B cell (primary cell): ENCODE measurements at regions of chr22 and their contacts with region 1.

Region 1: DNA sequence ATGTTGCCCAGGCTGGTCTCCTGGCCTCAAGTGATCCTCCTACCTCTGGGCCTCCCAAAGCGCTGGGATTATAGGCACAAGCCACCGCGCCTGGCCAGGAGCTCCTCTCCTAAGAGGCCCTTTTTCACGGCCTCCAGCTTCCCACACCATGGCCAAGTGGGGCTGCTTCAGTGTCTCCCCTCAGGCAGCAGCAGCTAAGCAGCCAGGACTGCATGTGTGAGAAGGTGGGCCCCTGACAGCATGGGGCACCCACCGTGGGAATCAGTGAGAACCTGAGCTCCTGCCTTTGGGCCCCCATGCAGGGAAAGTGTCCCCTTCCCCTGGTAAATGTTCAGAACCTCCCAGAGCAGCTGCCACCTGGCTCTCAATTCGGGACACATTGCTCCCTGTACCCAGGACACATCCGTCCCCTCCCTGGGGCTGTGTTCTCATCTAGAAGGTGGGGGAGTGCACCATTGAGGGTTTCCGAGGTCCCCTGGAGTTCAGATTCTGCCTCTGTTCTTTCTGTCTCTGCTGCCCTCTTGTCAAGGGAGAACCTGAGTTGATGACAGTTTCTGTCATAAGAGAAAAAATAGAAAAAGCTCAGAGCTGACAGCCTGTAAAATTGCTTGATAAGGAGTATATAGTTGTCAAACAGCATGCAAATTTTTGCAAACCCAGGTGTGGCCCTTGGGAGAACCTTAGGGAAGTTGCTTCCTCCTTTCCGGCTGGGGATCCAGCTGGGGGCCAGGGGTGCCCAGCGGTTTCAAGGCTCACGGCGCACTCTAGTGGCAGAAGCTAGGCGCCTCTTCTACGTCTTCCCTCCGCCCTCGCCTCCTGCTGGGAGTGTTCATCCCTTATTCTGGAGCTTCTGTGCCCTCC is 29.7 kb downstream of the FAM83F start:
- DNase-seq: peak; percentile 77
- ATAC-seq: peak; percentile 79
- H3K4me3 ChIP-seq: no peak overlapping the region
- H3K4me3 Mint-ChIP-seq: no peak overlapping the region
- H3K27ac ChIP-seq: no peak overlapping the region
- H3K27ac Mint-ChIP-seq: no peak overlapping the region
- H3K4me1 ChIP-seq: peaks cover 7 to 8% of the 10 kb centered on the region in 2 donors
- H3K4me1 Mint-ChIP-seq: peaks cover 5% of the 10 kb centered on the region
- H3K27me3 ChIP-seq: peaks cover 0 to 3% (median 0%) of the 10 kb centered on the region in 4 experiments
- H3K27me3 Mint-ChIP-seq: peaks cover 7% of the 10 kb centered on the region
- CTCF ChIP-seq: peak; percentile 79

Region 2: GRCh38 chr22:39343259-39344048 is 681.0 kb before region 1 on chr22:
- CTCF ChIA-PET with region 1: interaction called, 12 read pairs
- POLR2A ChIA-PET with region 1: no interaction called
- intact Hi-C with region 1: no loop called
- DNase-seq: peak; percentile 76
- ATAC-seq: peak; percentile 90
- H3K4me3 ChIP-seq: no peak overlapping the region
- H3K4me3 Mint-ChIP-seq: no peak overlapping the region
- H3K27ac ChIP-seq: no peak overlapping the region
- H3K27ac Mint-ChIP-seq: no peak overlapping the region
- H3K4me1 ChIP-seq: peaks cover 6 to 8% of the 10 kb centered on the region in 2 donors
- H3K4me1 Mint-ChIP-seq: peaks cover 4% of the 10 kb centered on the region
- H3K27me3 ChIP-seq: peaks cover 0 to 10% (median 0%) of the 10 kb centered on the region in 4 experiments
- H3K27me3 Mint-ChIP-seq: peaks cover 10% of the 10 kb centered on the region
- CTCF ChIP-seq: peak; percentile 85

Region 3: GRCh38 chr22:39502109-39502788 is 522.2 kb before region 1 on chr22 and contains the start of gene MIEF1:
- CTCF ChIA-PET with region 1: interaction called, 15 read pairs
- POLR2A ChIA-PET with region 1: no interaction called
- intact Hi-C with region 1: no loop called
- DNase-seq: peak; percentile 93
- ATAC-seq: peak; percentile 98
- H3K4me3 ChIP-seq: peak within 1 kb of the TSS; percentile 48 to 85 (median 83)
- H3K4me3 Mint-ChIP-seq: peak within 1 kb of the TSS; percentile 96
- H3K27ac ChIP-seq: peak within 1 kb of the TSS; percentile 45 to 74
- H3K27ac Mint-ChIP-seq: peak within 1 kb of the TSS; percentile 93
- H3K4me1 ChIP-seq: peaks cover 16 to 25% of the 10 kb centered on the region in 2 donors
- H3K4me1 Mint-ChIP-seq: peaks cover 39% of the 10 kb centered on the region
- H3K27me3 ChIP-seq: no peaks in the 10 kb centered on the region
- H3K27me3 Mint-ChIP-seq: no peaks in the 10 kb centered on the region
- CTCF ChIP-seq: no peak
- total RNA-seq, gene MIEF1: 37.2 and 43.4 TPM in 2 replicates

Region 4: GRCh38 chr22:39622881-39623367 is 401.5 kb before region 1 on chr22:
- CTCF ChIA-PET with region 1: interaction called, 18 read pairs
- POLR2A ChIA-PET with region 1: no interaction called
- intact Hi-C with region 1: no loop called
- DNase-seq: peak; percentile 71
- ATAC-seq: peak; percentile 74
- H3K4me3 ChIP-seq: no peak overlapping the region
- H3K4me3 Mint-ChIP-seq: no peak overlapping the region
- H3K27ac ChIP-seq: no peak overlapping the region
- H3K27ac Mint-ChIP-seq: no peak overlapping the region
- H3K4me1 ChIP-seq: peaks cover 4 to 8% of the 10 kb centered on the region in 2 donors
- H3K4me1 Mint-ChIP-seq: peaks cover 4% of the 10 kb centered on the region
- H3K27me3 ChIP-seq: peaks cover 0 to 52% (median 13%) of the 10 kb centered on the region in 4 experiments
- H3K27me3 Mint-ChIP-seq: peaks cover 39% of the 10 kb centered on the region
- CTCF ChIP-seq: peak; percentile 60

Region 5: DNA sequence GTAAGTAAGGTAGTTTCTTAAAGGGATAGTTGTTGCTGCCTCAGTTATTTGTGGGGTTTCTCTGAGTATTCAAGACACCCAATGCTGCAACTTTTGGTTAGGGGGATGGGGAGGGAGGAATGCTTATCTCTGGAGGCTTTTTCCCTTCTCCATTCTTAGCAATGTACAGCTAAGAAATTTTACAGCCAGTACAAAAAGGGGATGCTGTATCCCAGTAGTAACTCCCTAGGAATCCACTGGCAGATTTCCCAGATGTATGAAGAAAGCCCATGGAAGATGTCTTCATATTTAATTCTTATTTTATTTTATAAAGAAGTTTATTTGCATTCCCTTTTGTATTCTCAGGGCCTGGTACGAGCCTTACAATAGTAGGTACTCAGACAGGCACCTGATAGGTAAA is 285.7 kb before region 1 on chr22:
- CTCF ChIA-PET with region 1: no interaction called
- POLR2A ChIA-PET with region 1: no interaction called
- intact Hi-C with region 1: no loop called
- DNase-seq: no peak
- ATAC-seq: no peak
- H3K4me3 ChIP-seq: no peak overlapping the region
- H3K4me3 Mint-ChIP-seq: no peak overlapping the region
- H3K27ac ChIP-seq: no peak overlapping the region
- H3K27ac Mint-ChIP-seq: no peak overlapping the region
- H3K4me1 ChIP-seq: no peaks in the 10 kb centered on the region
- H3K4me1 Mint-ChIP-seq: no peaks in the 10 kb centered on the region
- H3K27me3 ChIP-seq: peaks cover 0 to 4% (median 2%) of the 10 kb centered on the region in 4 experiments
- H3K27me3 Mint-ChIP-seq: peaks cover 12% of the 10 kb centered on the region
- CTCF ChIP-seq: no peak

Region 6: DNA sequence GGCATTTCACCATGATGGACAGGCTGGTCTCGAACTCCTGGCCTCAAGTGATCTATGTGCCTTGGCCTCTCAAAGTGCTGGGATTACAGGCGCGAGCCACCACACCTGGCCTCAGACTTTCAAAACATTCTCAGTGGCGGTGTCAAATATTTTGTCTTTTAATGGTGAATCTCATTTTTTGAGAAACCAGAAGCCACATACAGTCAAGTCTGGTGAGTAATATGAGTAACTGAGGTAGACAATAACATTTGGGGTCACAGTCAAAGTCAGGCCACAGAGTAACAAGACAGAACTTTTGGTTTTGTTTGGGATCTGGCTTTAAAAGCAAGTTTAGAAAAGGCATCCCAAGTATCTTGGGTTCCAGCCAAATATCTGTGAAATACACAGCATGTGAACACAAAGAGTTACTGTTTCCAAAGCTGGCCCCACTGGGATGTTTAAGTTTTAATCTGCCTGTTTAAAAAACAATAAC is 69.8 kb before region 1 on chr22:
- CTCF ChIA-PET with region 1: interaction called, 8 read pairs
- POLR2A ChIA-PET with region 1: no interaction called
- intact Hi-C with region 1: loop called (anchors 5 kb)
- DNase-seq: no peak
- ATAC-seq: no peak
- H3K4me3 ChIP-seq: no peak overlapping the region
- H3K4me3 Mint-ChIP-seq: no peak overlapping the region
- H3K27ac ChIP-seq: no peak overlapping the region
- H3K27ac Mint-ChIP-seq: no peak overlapping the region
- H3K4me1 ChIP-seq: peaks cover 35 to 49% of the 10 kb centered on the region in 2 donors
- H3K4me1 Mint-ChIP-seq: peaks cover 61% of the 10 kb centered on the region
- H3K27me3 ChIP-seq: no peaks in the 10 kb centered on the region
- H3K27me3 Mint-ChIP-seq: peaks cover 11% of the 10 kb centered on the region
- CTCF ChIP-seq: no peak

Region 7: DNA sequence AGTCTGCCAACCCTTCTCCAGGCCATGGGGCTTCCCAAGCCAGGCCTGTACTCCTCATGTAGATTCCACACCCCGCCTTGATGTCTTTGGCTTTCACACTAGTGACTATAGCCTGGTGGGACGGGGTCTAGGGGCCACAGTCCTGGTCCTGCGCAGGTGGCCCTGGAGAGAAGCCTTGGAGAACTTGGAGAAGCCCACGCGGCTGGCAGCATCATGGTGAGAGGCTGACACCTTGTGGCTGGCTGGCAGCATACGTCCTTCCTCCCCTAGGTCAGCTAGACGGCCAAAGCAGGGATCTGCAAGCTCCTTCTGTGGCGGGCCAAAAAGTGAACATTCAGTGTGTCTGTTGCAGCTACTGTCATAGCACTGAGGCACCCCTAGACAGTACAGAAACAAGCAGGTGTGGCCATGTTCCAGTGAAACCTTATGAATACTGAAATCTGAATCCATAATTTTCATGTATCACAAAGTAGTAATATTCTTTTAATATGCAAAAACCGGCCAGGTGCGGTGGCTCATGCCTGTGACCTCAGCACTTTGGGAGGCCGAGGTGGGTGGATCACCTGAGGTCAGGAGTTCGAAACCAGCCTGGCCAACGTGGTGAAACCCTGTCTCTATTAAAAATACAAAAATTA is 12.3 kb after region 1 on chr22:
- CTCF ChIA-PET with region 1: interaction called, 27 read pairs
- POLR2A ChIA-PET with region 1: no interaction called
- intact Hi-C with region 1: no loop called
- DNase-seq: peak; percentile 73
- ATAC-seq: peak; percentile 88
- H3K4me3 ChIP-seq: no peak overlapping the region
- H3K4me3 Mint-ChIP-seq: no peak overlapping the region
- H3K27ac ChIP-seq: no peak overlapping the region
- H3K27ac Mint-ChIP-seq: no peak overlapping the region
- H3K4me1 ChIP-seq: peaks cover 0 to 5% of the 10 kb centered on the region in 2 donors
- H3K4me1 Mint-ChIP-seq: peaks cover 2% of the 10 kb centered on the region
- H3K27me3 ChIP-seq: peaks cover 0 to 43% (median 10%) of the 10 kb centered on the region in 4 experiments
- H3K27me3 Mint-ChIP-seq: peaks cover 26% of the 10 kb centered on the region
- CTCF ChIP-seq: peak; percentile 78

Region 8: DNA sequence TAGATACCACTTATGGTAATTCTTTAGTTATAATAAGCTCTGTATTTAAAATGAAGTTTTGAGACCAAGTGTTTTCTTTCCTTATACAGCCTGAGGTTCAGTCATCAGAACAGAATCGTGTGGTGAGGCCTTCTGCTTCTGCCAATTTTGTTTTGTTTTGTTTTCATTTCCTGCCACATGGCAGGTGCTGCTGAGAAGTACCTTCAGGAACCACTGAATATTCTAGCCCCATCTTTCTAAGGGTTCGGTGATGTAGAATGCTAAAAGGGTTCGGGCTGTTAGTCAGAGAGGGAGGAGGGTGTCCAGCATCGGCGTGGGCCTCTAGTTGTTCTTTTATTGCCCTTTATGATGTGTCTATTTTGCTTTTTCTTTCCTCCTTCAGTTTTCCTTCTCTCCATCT is 179.1 kb after region 1 on chr22:
- CTCF ChIA-PET with region 1: no interaction called
- POLR2A ChIA-PET with region 1: no interaction called
- intact Hi-C with region 1: no loop called
- DNase-seq: peak; percentile 61
- ATAC-seq: peak; percentile 84
- H3K4me3 ChIP-seq: no peak overlapping the region
- H3K4me3 Mint-ChIP-seq: peak overlapping the region; percentile 58
- H3K27ac ChIP-seq: peak overlapping the region in 1 of 2 donors; percentile 80
- H3K27ac Mint-ChIP-seq: peak overlapping the region; percentile 81
- H3K4me1 ChIP-seq: peaks cover 35 to 40% of the 10 kb centered on the region in 2 donors
- H3K4me1 Mint-ChIP-seq: peaks cover 62% of the 10 kb centered on the region
- H3K27me3 ChIP-seq: no peaks in the 10 kb centered on the region
- H3K27me3 Mint-ChIP-seq: no peaks in the 10 kb centered on the region
- CTCF ChIP-seq: no peak